ENCODE measurements at regions of chr9 and their contacts with region 1.

Region 1: GRCh38 chr9:89000973-89001916 is 10.0 kb downstream of the S1PR3 start:
- DNase-seq: peak; percentile 66
- ATAC-seq: peak; percentile 95
- H3K4me3 ChIP-seq: 0 out of 4 replicates have a peak overlapping the region, but pooled peaks of 1 of the 2 experiments have one; percentile 7
- H3K27ac ChIP-seq: no peak overlapping the region
- H3K4me1 ChIP-seq: peaks cover 0 to 8% of the 10 kb centered on the region in 2 experiments; a peak in 1 of 4 replicates
- H3K27me3 ChIP-seq: peaks cover 12% of the 10 kb centered on the region
- CTCF ChIP-seq: peak; percentile 68 to 84 (median 80)
- POLR2A ChIP-seq: no peak
- RAD21 ChIP-seq: peak; percentile 93

Region 2: DNA sequence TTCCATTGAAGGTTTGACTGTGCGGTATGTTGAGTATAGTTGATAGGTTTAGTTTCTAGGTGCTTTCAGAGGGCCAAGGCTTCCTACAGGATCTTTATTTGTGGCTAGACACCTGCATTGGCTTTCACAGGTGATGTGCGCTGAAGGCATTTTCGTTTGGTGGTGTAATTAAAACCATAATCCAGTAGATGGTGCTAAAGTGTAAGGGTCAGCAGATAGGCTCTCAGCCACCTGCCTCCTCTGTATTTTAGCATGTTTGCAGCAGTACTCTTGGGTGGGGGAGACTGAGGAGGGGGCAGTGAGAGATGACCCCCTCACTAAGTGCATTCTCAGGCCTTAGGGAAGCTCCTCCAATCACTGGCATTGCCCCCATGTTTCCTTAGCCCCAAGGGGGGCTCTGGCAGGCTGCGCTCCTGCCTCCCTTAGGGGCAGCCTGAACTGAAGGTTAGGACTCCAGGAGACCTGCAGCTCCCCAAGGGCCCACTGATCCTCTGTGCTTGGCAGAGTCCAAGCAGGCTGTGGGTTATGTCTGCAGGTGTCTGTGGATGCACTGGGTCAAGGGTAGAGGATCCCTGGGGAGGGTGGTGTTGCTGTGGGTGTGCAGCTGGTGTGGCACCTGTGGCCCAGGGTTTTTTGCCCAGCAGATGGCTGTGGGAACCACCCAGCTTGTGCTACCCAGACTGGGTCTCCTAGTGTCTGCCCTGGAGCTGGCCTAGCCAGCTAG is 1050.3 kb before region 1 on chr9:
- CTCF ChIA-PET with region 1: interaction called, 5 read pairs
- POLR2A ChIA-PET with region 1: no interaction called
- RAD21 ChIA-PET with region 1: no interaction called
- intact Hi-C with region 1: loop called (anchors 2 kb)
- DNase-seq: peak; percentile 28
- ATAC-seq: peak; percentile 86
- H3K4me3 ChIP-seq: no peak overlapping the region
- H3K27ac ChIP-seq: no peak overlapping the region
- H3K4me1 ChIP-seq: no peaks in the 10 kb centered on the region
- H3K27me3 ChIP-seq: no peaks in the 10 kb centered on the region
- CTCF ChIP-seq: peak; percentile 49 to 76 (median 71); a peak in 5 of 6 replicates
- POLR2A ChIP-seq: no peak
- RAD21 ChIP-seq: peak; percentile 91

Region 3: GRCh38 chr9:88523056-88523455 is 478.2 kb before region 1 on chr9:
- CTCF ChIA-PET with region 1: no interaction called
- POLR2A ChIA-PET with region 1: no interaction called
- RAD21 ChIA-PET with region 1: no interaction called
- intact Hi-C with region 1: no loop called
- DNase-seq: no peak
- ATAC-seq: peak; percentile 72
- H3K4me3 ChIP-seq: peak overlapping the region in 1 of 2 experiments; percentile 16; a peak in 2 of 4 replicates
- H3K27ac ChIP-seq: no peak overlapping the region
- H3K4me1 ChIP-seq: peaks cover 17 to 24% of the 10 kb centered on the region in 2 experiments
- H3K27me3 ChIP-seq: no peaks in the 10 kb centered on the region
- CTCF ChIP-seq: no peak
- POLR2A ChIP-seq: no peak
- RAD21 ChIP-seq: no peak

Region 4: GRCh38 chr9:88593537-88594185 is 407.6 kb before region 1 on chr9:
- CTCF ChIA-PET with region 1: interaction called, 14 read pairs
- POLR2A ChIA-PET with region 1: interaction called, 4 read pairs
- RAD21 ChIA-PET with region 1: no interaction called
- intact Hi-C with region 1: loop called (anchors 1 kb)
- DNase-seq: peak; percentile 34
- ATAC-seq: peak; percentile 81
- H3K4me3 ChIP-seq: no peak overlapping the region
- H3K27ac ChIP-seq: no peak overlapping the region
- H3K4me1 ChIP-seq: no peaks in the 10 kb centered on the region
- H3K27me3 ChIP-seq: no peaks in the 10 kb centered on the region; the same call in 1 of the 2 replicates
- CTCF ChIP-seq: peak; percentile 67 to 82 (median 79)
- POLR2A ChIP-seq: no peak
- RAD21 ChIP-seq: peak; percentile 81

Region 5: DNA sequence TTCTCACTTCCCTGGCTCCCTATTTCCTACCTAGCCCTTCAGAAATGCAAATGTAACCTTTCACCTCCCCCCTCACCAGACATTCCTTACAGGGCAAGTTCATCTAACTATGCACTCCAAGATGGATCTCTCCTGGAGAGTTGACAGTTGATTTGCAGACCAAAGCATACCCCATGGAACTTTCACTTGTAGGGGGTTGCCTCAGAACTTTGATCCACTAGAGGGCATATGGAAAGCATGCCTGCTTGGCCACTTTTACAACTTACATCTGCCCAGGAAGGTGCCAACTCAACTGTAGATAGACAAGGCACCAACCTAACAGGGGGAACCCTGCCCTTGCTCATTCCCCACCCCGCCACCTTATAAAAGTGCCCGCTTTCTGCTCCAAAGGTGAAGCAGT is 278.5 kb before region 1 on chr9:
- CTCF ChIA-PET with region 1: interaction called, 3 read pairs
- POLR2A ChIA-PET with region 1: no interaction called
- RAD21 ChIA-PET with region 1: no interaction called
- intact Hi-C with region 1: loop called (anchors 10 kb)
- DNase-seq: no peak
- ATAC-seq: peak; percentile 64
- H3K4me3 ChIP-seq: no peak overlapping the region
- H3K27ac ChIP-seq: no peak overlapping the region
- H3K4me1 ChIP-seq: no peaks in the 10 kb centered on the region
- H3K27me3 ChIP-seq: no peaks in the 10 kb centered on the region; the same call in none of the 2 replicates
- CTCF ChIP-seq: peak; percentile 15 to 41 (median 40); a peak in 4 of 6 replicates
- POLR2A ChIP-seq: no peak
- RAD21 ChIP-seq: peak; percentile 37

Region 6: DNA sequence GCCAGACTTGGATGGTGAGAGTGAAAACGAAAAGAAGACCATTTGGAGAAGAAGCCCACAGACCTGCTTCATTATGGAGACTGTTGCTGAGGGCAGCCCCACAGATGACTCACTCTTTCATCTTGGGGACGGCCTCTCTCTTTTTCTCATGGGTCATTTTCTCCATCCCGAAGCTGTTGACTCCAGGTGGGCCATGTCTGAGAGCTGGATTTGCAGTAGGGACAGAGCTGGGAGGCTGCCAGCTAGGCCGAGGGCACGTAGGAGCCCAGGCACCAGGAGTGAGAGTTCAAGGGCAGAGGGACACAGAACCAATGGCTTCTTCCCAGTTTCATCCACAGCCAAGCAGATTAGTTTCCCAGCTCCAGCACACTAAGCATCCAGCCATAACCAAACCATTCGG is 82.4 kb after region 1 on chr9:
- CTCF ChIA-PET with region 1: no interaction called
- POLR2A ChIA-PET with region 1: no interaction called
- RAD21 ChIA-PET with region 1: no interaction called
- intact Hi-C with region 1: no loop called
- DNase-seq: no peak
- ATAC-seq: no peak
- H3K4me3 ChIP-seq: no peak overlapping the region
- H3K27ac ChIP-seq: no peak overlapping the region
- H3K4me1 ChIP-seq: no peaks in the 10 kb centered on the region
- H3K27me3 ChIP-seq: peaks cover 9% of the 10 kb centered on the region; the same call in 1 of the 2 replicates
- CTCF ChIP-seq: no peak
- POLR2A ChIP-seq: no peak
- RAD21 ChIP-seq: no peak

Region 7: GRCh38 chr9:89278997-89279739 is 277.9 kb after region 1 on chr9:
- CTCF ChIA-PET with region 1: interaction called, 6 read pairs
- POLR2A ChIA-PET with region 1: no interaction called
- RAD21 ChIA-PET with region 1: no interaction called
- intact Hi-C with region 1: loop called (anchors 1 kb)
- DNase-seq: peak; percentile 36
- ATAC-seq: peak; percentile 67
- H3K4me3 ChIP-seq: no peak overlapping the region
- H3K27ac ChIP-seq: no peak overlapping the region
- H3K4me1 ChIP-seq: no peaks in the 10 kb centered on the region
- H3K27me3 ChIP-seq: no peaks in the 10 kb centered on the region
- CTCF ChIP-seq: peak; percentile 50 to 74 (median 67); a peak in 5 of 6 replicates
- POLR2A ChIP-seq: no peak
- RAD21 ChIP-seq: peak; percentile 78

Measured in HCT116 (cell line).